Tibial artery (tissue), 4 donors: ENCODE measurements at regions of chr11 and their contacts with region 1.

Region 1: DNA sequence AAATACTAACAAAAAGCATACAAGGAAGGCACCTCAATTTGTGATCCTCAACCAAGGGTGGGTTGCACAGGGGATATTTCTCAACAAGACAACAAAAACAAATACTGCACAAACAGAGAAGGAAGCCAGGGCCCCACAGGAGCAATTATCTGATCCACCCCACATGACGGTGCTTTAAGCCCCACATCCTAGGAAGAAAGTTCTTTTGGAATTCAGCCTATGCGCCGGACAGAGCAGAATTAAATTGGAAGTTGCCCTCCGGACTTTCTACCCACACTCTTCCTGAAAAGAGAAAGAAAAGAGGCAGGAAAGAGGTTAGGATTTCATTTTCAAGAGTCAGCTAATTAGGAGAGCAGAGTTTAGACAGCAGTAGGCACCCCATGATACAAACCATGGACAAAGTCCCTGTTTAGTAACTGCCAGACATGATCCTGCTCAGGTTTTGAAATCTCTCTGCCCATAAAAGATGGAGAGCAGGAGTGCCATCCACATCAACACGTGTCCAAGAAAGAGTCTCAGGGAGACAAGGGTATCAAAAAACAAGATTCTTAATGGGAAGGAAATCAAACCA is 40.6 kb downstream of the OSBP start:
- DNase-seq: no peak
- H3K4me3 ChIP-seq: no peak overlapping the region
- H3K27ac ChIP-seq: peak overlapping the region; percentile 24 to 34
- H3K4me1 ChIP-seq: peaks cover 0 to 20% (median 2%) of the 10 kb centered on the region in 4 donors
- H3K27me3 ChIP-seq: no peaks in the 10 kb centered on the region
- CTCF ChIP-seq: no peak

Region 2: GRCh38 chr11:59545179-59546020 is 29.6 kb before region 1 on chr11:
- intact Hi-C with region 1: loop called (anchors 5 kb)
- DNase-seq: no peak
- H3K4me3 ChIP-seq: no peak overlapping the region
- H3K27ac ChIP-seq: no peak overlapping the region
- H3K4me1 ChIP-seq: no peaks in the 10 kb centered on the region
- H3K27me3 ChIP-seq: no peaks in the 10 kb centered on the region
- CTCF ChIP-seq: no peak

Region 3: DNA sequence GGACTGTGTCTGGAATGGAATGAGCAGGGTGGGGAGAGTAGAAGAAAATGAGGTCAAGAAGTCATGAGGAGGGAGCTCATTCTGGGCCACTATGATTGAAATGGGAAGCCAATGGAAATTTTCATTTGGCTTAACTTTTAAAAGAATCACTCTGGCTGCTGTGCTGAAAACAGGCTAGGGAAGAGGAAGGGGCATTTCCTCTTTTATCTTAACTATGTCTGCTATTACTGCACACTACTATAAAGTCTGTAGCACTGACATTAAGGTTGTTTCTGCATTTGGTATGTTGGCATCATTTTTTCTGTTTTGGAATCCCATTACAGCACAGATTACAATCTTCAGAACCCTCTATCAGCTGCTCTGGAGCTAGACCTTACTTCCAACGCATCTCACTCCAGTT is 85.6 kb after region 1 on chr11:
- intact Hi-C with region 1: no loop called
- DNase-seq: no peak
- H3K4me3 ChIP-seq: no peak overlapping the region
- H3K27ac ChIP-seq: no peak overlapping the region
- H3K4me1 ChIP-seq: peaks cover 0 to 9% (median 2%) of the 10 kb centered on the region in 4 donors
- H3K27me3 ChIP-seq: no peaks in the 10 kb centered on the region
- CTCF ChIP-seq: no peak